ENCODE measurements at regions of chr1 and their contacts with region 1.

Region 1: DNA sequence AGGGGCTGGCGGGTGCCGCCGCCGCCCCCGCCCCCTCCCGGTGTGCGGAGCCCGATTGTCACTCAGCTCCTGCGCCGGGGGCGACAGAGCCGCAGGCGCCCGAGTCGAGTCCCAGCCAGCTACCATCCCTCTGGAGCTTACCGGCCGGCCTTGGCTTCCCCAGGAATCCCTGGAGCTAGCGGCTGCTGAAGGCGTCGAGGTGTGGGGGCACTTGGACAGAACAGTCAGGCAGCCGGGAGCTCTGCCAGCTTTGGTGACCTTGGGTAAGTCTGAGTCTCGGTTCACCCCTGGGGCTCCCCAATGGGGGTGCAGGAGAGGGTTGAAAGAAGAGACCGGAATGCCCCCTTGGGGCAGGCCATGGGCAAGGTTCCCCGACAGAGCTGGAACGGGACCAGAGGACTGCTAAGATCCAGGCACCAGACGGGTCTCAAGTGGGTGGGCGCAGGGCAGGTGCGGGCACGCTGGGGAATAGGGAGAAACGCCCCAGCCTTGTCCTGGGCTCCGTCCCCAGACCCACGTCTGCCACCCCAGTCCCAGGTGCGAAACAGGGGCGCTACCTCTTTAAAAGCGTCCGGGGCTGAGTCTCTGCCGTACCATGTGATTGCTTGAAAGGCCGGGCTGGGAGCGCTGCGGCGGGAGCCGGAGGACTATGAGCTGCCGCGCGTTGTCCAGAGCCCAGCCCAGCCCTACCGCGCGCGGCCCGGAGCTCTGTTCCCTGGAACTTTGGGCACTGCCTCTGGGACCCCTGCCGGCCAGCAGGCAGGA is at the start of gene ADORA1:
- DNase-seq: peak; percentile 80
- ATAC-seq: peak; percentile 87
- H3K4me3 Mint-ChIP-seq: peak within 1 kb of the TSS; percentile 67
- H3K27ac Mint-ChIP-seq: no peak within 1 kb of the TSS
- H3K4me1 Mint-ChIP-seq: peaks cover 33% of the 10 kb centered on the region
- H3K27me3 Mint-ChIP-seq: peaks cover 37% of the 10 kb centered on the region
- CTCF ChIP-seq: no peak
- total RNA-seq, gene ADORA1: 1.8 to 2.7 TPM (median 2.6 TPM) in 3 replicates

Region 2: DNA sequence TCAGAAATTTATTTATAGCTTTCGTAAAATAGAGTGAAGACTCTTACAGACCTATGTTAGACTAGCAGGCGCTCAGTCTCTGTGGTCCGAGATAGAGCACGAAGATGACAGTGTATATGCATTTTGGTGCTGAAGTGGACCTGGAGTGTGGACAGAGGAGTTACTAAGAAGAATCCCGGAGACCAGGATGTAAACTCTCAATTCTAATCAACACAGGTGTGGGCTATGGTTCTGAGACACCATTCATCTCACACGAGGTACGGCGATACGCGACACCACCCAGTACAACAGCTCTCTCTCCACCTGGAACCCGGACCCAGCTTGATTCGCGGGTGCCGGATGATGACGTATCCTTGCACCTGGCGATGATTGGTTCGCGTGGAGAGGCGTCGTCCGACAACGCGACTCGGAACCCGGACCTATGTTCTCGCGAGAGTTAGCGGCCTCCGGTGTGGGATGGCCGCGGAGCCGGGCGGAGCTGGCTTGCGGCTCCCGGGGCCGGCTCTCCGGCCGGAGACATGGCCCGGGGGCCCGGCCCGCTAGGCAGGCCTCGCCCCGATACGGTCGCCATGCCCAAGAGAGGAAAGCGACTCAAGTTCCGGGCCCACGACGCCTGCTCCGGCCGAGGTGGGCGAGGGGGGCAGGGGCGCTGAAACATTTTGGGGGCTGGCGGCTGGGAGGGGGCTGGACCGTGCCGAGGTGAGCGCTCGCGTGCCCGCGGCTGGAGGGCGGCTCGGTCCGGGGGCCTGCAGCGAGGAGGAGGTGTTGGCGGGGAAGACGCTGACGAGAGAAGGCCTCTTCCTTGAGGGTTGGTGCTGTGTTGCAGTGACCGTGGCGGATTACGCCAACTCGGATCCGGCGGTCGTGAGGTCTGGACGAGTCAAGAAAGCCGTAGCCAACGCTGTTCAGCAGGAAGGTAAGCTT is 120.6 kb before region 1 on chr1 and contains the start of gene TMEM183A:
- CTCF ChIA-PET with region 1: no interaction called
- POLR2A ChIA-PET with region 1: no interaction called
- DNase-seq: peak; percentile 98
- ATAC-seq: peak; percentile 91
- H3K4me3 Mint-ChIP-seq: peak within 1 kb of the TSS; percentile 96
- H3K27ac Mint-ChIP-seq: peak within 1 kb of the TSS; percentile 100
- H3K4me1 Mint-ChIP-seq: peaks cover 23% of the 10 kb centered on the region
- H3K27me3 Mint-ChIP-seq: no peaks in the 10 kb centered on the region
- CTCF ChIP-seq: no peak
- total RNA-seq, gene TMEM183A: 97.4 to 108 TPM (median 99.8 TPM) in 3 replicates

Region 3: GRCh38 chr1:203057911-203058675 is 69.8 kb before region 1 on chr1:
- CTCF ChIA-PET with region 1: interaction called, 35 read pairs
- POLR2A ChIA-PET with region 1: no interaction called
- DNase-seq: no peak
- ATAC-seq: no peak
- H3K4me3 Mint-ChIP-seq: no peak overlapping the region
- H3K27ac Mint-ChIP-seq: no peak overlapping the region
- H3K4me1 Mint-ChIP-seq: peaks cover 34% of the 10 kb centered on the region
- H3K27me3 Mint-ChIP-seq: no peaks in the 10 kb centered on the region
- CTCF ChIP-seq: no peak

Region 4: DNA sequence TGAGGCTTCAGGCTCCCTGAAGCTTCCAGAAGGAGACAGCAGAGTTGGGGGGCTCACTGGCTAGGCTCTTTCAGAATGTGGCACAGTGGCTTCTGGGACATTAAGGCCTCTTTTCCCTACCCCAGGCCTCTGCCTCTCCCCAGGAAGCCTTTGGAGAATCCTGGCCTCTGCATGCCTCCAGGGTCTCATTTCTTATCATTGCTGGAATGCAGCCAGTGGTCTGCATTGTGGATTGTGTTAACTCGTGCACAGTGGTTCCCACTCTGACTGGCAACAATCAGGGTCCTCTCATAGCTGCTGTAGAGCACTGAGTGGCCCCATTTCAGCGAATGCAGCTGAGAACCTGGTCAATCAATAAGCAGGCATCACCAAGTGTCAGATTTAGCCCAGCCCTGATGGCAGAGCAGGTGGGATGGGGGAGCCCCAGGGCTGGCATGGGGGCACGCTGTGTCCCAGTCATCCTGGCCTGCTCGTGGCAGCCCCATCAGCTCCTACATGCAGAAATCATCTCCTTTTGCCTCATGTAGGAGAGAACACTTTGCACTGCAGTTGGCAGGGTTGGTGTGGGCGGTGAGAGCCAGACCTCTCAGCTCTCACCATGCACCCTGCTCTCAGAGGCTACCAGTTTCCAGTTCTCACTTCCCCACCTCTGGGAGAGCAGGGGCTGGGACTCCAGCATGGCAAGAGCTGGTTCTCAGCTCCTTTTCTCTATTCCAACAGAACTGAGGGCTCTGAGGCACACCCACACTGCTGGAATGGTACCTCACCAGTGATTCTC is 13.1 kb after region 1 on chr1:
- CTCF ChIA-PET with region 1: interaction called, 184 read pairs
- POLR2A ChIA-PET with region 1: interaction called, 3 read pairs
- DNase-seq: no peak
- ATAC-seq: peak; percentile 49
- H3K4me3 Mint-ChIP-seq: no peak overlapping the region
- H3K27ac Mint-ChIP-seq: no peak overlapping the region
- H3K4me1 Mint-ChIP-seq: peaks cover 18% of the 10 kb centered on the region
- H3K27me3 Mint-ChIP-seq: no peaks in the 10 kb centered on the region; the same call in 1 of the 2 replicates
- CTCF ChIP-seq: no peak

Region 5: DNA sequence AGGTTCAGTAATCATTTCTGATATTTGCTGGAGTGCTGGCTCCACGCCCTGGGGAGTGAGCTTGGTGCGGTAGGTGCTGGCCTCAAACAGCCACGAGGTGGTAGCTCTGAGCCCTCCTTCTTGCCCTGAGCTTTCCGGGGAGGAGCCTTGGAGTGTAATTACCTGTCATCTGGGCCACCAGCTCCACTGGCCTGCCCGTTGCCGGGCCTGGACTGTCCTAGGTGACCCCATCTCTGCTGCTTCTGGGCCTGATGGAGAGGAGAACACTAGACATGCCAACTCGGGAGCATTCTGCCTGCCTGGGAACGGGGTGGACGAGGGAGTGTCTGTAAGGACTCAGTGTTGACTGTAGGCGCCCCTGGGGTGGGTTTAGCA is 38.7 kb after region 1 on chr1:
- CTCF ChIA-PET with region 1: interaction called, 79 read pairs
- POLR2A ChIA-PET with region 1: no interaction called
- DNase-seq: no peak
- ATAC-seq: peak; percentile 76
- H3K4me3 Mint-ChIP-seq: no peak overlapping the region
- H3K27ac Mint-ChIP-seq: no peak overlapping the region
- H3K4me1 Mint-ChIP-seq: peaks cover 3% of the 10 kb centered on the region; the same call in 1 of the 2 replicates
- H3K27me3 Mint-ChIP-seq: no peaks in the 10 kb centered on the region; the same call in 1 of the 2 replicates
- CTCF ChIP-seq: no peak

Region 6: DNA sequence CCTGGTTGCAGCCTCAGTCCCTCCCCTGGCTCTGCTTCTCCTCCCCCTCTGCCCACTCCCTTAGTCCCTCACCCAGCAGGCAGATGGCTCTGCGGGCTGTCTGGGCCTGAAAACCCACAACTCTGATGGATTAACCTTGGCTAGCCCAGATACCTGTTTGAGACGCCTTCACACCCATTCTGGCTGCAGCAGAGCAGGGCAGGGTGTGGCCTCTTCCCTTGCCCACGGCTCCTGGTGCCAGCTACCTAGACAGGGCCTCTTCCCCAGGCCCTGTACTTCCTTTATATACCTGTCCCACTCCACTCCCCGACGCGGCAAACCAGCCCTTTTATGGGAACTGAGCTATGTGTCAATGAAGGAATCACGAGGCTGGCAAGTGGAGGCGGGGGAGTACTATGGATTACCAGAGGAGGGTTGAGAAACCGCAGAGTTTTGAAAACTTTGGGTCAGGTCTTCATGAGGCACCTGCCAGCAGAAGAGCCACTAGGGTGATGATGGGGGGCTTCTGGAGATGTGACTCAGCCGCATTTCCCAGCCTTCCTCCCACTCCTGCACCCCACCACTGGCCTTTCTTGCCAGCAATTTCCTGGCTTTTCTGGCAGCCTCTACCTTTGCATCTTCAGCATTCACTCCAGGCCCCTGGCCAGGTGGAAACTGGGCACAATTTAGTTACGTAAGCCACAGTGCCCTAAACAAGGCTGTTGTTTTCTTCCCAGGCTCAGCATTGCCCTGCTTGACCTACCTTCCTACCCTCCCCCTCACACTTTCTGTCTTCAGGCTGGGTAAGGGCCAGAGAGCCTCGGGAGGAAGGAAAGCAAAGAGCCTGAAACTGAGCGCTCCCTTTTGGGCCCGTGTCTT is 58.8 kb after region 1 on chr1 and contains the start of gene CHI3L1:
- CTCF ChIA-PET with region 1: interaction called, 20 read pairs
- POLR2A ChIA-PET with region 1: no interaction called
- DNase-seq: no peak
- ATAC-seq: peak; percentile 65
- H3K4me3 Mint-ChIP-seq: peak within 1 kb of the TSS; percentile 32; the same call in 1 of the 2 replicates
- H3K27ac Mint-ChIP-seq: no peak within 1 kb of the TSS
- H3K4me1 Mint-ChIP-seq: peaks cover 32% of the 10 kb centered on the region
- H3K27me3 Mint-ChIP-seq: peaks cover 2% of the 10 kb centered on the region; the same call in 1 of the 2 replicates
- CTCF ChIP-seq: no peak
- total RNA-seq, gene CHI3L1: 0.24 to 0.41 TPM (median 0.27 TPM) in 3 replicates

Region 7: GRCh38 chr1:203273206-203273868 is 145.5 kb after region 1 on chr1:
- CTCF ChIA-PET with region 1: interaction called, 93 read pairs
- POLR2A ChIA-PET with region 1: no interaction called
- DNase-seq: peak; percentile 90
- ATAC-seq: peak; percentile 70
- H3K4me3 Mint-ChIP-seq: peak overlapping the region; percentile 59
- H3K27ac Mint-ChIP-seq: no peak overlapping the region
- H3K4me1 Mint-ChIP-seq: peaks cover 13% of the 10 kb centered on the region
- H3K27me3 Mint-ChIP-seq: peaks cover 47% of the 10 kb centered on the region
- CTCF ChIP-seq: peak; percentile 97

Measured in WTC11 (cell line).